ENCODE measurements at regions of chrX and their contacts with region 1.

Region 1: GRCh38 chrX:136577552-136577951 is 45.5 kb downstream of the VGLL1 start:
- DNase-seq: no peak
- ATAC-seq: peak; percentile 100
- H3K4me3 ChIP-seq: no peak overlapping the region
- H3K27ac ChIP-seq: no peak overlapping the region
- H3K4me1 ChIP-seq: no peaks in the 10 kb centered on the region
- H3K27me3 ChIP-seq: no peaks in the 10 kb centered on the region
- CTCF ChIP-seq: peak; percentile 71 to 82 (median 82)
- EP300 ChIP-seq: no peak
- POLR2A ChIP-seq: no peak
- RAD21 ChIP-seq: peak; percentile 67

Region 2: GRCh38 chrX:135572436-135572835 is 1005.1 kb before region 1 on chrX:
- CTCF ChIA-PET with region 1: no interaction called
- POLR2A ChIA-PET with region 1: no interaction called
- RAD21 ChIA-PET with region 1: no interaction called
- SMC1A ChIA-PET with region 1: no interaction called
- in situ Hi-C with region 1: no loop called
- intact Hi-C with region 1: no loop called
- DNase-seq: no peak
- ATAC-seq: no peak
- H3K4me3 ChIP-seq: no peak overlapping the region
- H3K27ac ChIP-seq: no peak overlapping the region
- H3K4me1 ChIP-seq: no peaks in the 10 kb centered on the region
- H3K27me3 ChIP-seq: no peaks in the 10 kb centered on the region
- CTCF ChIP-seq: peak in 2 of 3 experiments; percentile 20 to 27; a peak in 3 of 6 replicates
- EP300 ChIP-seq: no peak
- POLR2A ChIP-seq: no peak
- RAD21 ChIP-seq: peak; percentile 38; the same call in 1 of the 2 replicates

Region 3: GRCh38 chrX:136028251-136028984 is 549.1 kb before region 1 on chrX:
- CTCF ChIA-PET with region 1: interaction called, 17 read pairs
- POLR2A ChIA-PET with region 1: no interaction called
- RAD21 ChIA-PET with region 1: interaction called, 5 read pairs
- SMC1A ChIA-PET with region 1: interaction called, 3 read pairs
- in situ Hi-C with region 1: no loop called
- intact Hi-C with region 1: loop called (anchors 10 kb)
- DNase-seq: no peak
- ATAC-seq: peak; percentile 81
- H3K4me3 ChIP-seq: no peak overlapping the region
- H3K27ac ChIP-seq: no peak overlapping the region
- H3K4me1 ChIP-seq: no peaks in the 10 kb centered on the region
- H3K27me3 ChIP-seq: no peaks in the 10 kb centered on the region
- CTCF ChIP-seq: peak; percentile 44 to 64 (median 62); a peak in 5 of 6 replicates
- EP300 ChIP-seq: no peak
- POLR2A ChIP-seq: no peak
- RAD21 ChIP-seq: peak; percentile 82

Region 4: DNA sequence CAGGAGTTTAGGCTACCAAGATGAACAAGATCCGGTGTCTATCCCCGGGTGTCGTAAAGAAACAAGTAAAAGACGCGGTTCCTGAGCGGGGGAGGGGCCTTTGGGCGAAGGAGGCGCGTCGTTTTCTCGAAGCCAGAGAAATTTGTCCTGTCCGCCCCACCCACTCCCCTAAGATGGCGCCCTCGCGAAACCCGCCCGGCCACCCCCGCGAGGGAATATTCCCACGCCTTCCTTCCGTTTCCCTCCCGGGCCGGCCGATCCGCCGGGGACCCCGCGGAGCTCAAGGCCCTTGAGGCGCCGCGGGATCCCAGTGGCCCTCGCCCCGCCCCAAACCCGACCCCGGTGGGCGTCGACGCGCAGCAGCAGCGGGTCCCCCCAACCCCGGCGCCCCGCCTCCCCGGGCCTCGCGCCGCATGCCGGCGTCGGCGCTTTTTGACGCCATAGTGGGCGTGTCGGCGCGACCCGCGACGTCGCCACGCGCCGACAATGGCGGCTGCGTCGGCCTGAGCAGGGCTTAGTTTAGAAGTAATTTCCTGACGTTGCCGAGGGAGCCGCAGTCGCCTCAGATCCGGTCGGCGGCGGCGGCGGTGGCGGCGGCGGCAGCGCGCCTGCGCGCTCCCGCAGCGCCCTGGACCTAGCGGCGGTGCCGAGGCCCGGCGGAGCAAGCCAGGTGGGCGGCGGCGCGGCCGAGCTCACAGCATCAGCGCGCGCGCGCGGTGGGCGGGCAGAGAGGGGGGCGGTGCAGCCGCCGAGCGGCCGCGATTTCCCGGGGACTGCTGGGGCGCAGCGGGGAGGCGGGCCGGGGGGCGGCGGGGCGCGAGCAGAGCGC is 80.6 kb before region 1 on chrX and contains the start of gene HTATSF1:
- CTCF ChIA-PET with region 1: interaction called, 4 read pairs
- POLR2A ChIA-PET with region 1: no interaction called
- RAD21 ChIA-PET with region 1: interaction called, 4 read pairs
- SMC1A ChIA-PET with region 1: no interaction called
- in situ Hi-C with region 1: no loop called
- intact Hi-C with region 1: loop called (anchors 5 kb)
- DNase-seq: peak; percentile 48
- ATAC-seq: peak; percentile 82
- H3K4me3 ChIP-seq: peak within 1 kb of the TSS; percentile 72
- H3K27ac ChIP-seq: peak within 1 kb of the TSS; percentile 90
- H3K4me1 ChIP-seq: no peaks in the 10 kb centered on the region
- H3K27me3 ChIP-seq: no peaks in the 10 kb centered on the region; a peak in 1 of 4 replicates
- CTCF ChIP-seq: no peak
- EP300 ChIP-seq: no peak
- POLR2A ChIP-seq: peak; percentile 57
- RAD21 ChIP-seq: no peak
- polyA plus RNA-seq, gene HTATSF1: 13.2 to 26.9 TPM

Region 5: DNA sequence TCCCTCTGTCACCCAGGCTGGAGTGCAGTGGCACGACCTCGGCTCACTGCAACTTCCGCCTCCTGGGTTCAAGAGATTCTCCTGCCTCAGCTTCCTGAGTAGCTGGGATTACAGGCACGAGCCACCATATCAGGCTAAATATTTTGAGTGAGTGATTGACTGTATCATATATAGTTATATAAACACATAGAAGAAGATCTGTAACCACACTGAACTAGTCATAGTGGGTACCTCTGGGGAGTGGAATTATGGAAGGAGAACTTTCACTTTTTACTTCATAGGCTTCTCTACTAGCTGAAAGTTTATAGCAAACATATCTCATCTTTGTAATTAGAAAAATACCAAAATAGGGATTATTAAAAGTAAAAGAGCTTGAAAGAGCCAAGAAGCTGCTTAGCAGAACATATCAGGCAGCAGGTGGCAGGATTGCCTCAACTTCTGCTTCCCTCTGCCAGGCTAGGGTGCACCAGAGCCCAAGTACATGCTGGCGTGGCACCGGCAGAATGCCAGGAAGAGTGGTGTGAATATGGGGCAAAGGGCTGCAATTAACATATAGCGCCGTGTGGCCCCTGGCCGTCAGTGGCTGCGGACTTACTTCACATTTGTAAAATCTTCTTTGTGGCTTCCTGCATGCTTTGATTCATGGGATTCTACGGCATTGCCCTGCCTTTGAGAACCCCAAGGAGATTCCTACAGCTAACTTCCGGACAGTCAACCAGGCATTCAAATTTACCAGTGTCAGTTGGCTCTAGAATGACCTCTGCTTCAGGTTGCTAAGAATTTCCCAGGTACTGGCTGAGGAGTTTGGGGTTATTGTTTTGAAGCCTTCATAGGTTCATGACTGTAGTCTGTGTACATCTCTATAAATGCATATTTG is 31.0 kb after region 1 on chrX:
- CTCF ChIA-PET with region 1: interaction called, 7 read pairs
- POLR2A ChIA-PET with region 1: no interaction called
- RAD21 ChIA-PET with region 1: no interaction called
- SMC1A ChIA-PET with region 1: interaction called, 11 read pairs
- in situ Hi-C with region 1: no loop called
- intact Hi-C with region 1: no loop called
- DNase-seq: no peak
- ATAC-seq: peak; percentile 80
- H3K4me3 ChIP-seq: no peak overlapping the region
- H3K27ac ChIP-seq: no peak overlapping the region
- H3K4me1 ChIP-seq: no peaks in the 10 kb centered on the region
- H3K27me3 ChIP-seq: no peaks in the 10 kb centered on the region
- CTCF ChIP-seq: peak; percentile 14 to 37 (median 29); a peak in 4 of 6 replicates
- EP300 ChIP-seq: no peak
- POLR2A ChIP-seq: no peak
- RAD21 ChIP-seq: peak; percentile 64

Region 6: GRCh38 chrX:136735601-136736000 is 158.0 kb after region 1 on chrX:
- CTCF ChIA-PET with region 1: no interaction called
- POLR2A ChIA-PET with region 1: no interaction called
- RAD21 ChIA-PET with region 1: no interaction called
- SMC1A ChIA-PET with region 1: no interaction called
- in situ Hi-C with region 1: no loop called
- intact Hi-C with region 1: no loop called
- DNase-seq: no peak
- ATAC-seq: peak; percentile 49; the same call in 2 of the 3 replicates
- H3K4me3 ChIP-seq: no peak overlapping the region
- H3K27ac ChIP-seq: no peak overlapping the region
- H3K4me1 ChIP-seq: no peaks in the 10 kb centered on the region
- H3K27me3 ChIP-seq: no peaks in the 10 kb centered on the region
- CTCF ChIP-seq: no peak; a peak in 1 of 6 replicates
- EP300 ChIP-seq: no peak
- POLR2A ChIP-seq: no peak
- RAD21 ChIP-seq: no peak

Region 7: DNA sequence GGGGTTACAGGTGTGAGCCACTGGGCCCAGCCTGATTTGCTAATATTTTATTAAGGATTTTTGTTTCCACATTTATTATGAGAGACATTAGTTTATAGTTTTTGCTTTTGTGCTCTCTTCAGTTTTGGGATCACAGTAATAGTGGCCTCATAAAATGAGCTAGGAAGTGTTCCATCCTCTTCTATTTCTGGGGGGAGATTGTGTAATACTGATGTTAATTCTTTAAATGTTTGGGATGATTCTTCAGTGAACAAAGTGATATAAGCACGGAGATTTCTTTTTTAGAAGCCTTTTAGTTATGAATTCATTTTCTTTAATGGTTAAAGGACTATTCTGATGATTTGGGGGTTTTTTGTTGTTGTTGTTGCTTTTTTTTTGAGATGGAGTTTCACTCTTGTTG is 261.6 kb after region 1 on chrX:
- CTCF ChIA-PET with region 1: no interaction called
- POLR2A ChIA-PET with region 1: no interaction called
- RAD21 ChIA-PET with region 1: no interaction called
- SMC1A ChIA-PET with region 1: no interaction called
- in situ Hi-C with region 1: no loop called
- intact Hi-C with region 1: no loop called
- DNase-seq: no peak
- ATAC-seq: no peak
- H3K4me3 ChIP-seq: no peak overlapping the region
- H3K27ac ChIP-seq: no peak overlapping the region
- H3K4me1 ChIP-seq: no peaks in the 10 kb centered on the region
- H3K27me3 ChIP-seq: no peaks in the 10 kb centered on the region
- CTCF ChIP-seq: no peak
- EP300 ChIP-seq: no peak
- POLR2A ChIP-seq: no peak
- RAD21 ChIP-seq: no peak

Region 8: DNA sequence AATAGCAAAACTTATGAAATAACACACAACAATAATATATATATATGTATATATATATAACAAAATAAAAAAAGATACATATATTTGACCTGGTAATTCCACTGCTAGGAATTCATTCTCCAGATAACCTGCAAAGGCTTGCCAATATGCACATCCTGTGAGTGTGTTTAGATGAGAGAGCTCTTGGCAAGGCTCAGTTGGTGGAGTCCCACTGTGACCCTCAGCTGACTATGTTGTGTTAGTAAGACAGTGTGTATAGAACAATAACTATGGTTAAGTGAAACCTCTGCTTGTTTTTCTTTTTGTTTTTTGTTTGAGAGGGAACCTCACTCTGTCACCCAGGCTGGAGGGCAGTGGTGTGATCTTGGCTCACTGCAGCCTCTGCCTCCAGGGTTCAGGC is 342.4 kb after region 1 on chrX:
- CTCF ChIA-PET with region 1: interaction called, 12 read pairs
- POLR2A ChIA-PET with region 1: no interaction called
- RAD21 ChIA-PET with region 1: no interaction called
- SMC1A ChIA-PET with region 1: interaction called, 4 read pairs
- in situ Hi-C with region 1: no loop called
- intact Hi-C with region 1: loop called (anchors 5 kb)
- DNase-seq: no peak
- ATAC-seq: no peak
- H3K4me3 ChIP-seq: no peak overlapping the region
- H3K27ac ChIP-seq: no peak overlapping the region
- H3K4me1 ChIP-seq: no peaks in the 10 kb centered on the region
- H3K27me3 ChIP-seq: no peaks in the 10 kb centered on the region
- CTCF ChIP-seq: no peak
- EP300 ChIP-seq: no peak
- POLR2A ChIP-seq: no peak
- RAD21 ChIP-seq: no peak

Measured in GM12878 (cell line).